Activated naive CD4-positive, alpha-beta T cell treated with anti-CD3 and anti-CD28 coated beads for 36 hours (primary cell): ENCODE measurements at regions of chr7 and their contacts with region 1.

Region 1: DNA sequence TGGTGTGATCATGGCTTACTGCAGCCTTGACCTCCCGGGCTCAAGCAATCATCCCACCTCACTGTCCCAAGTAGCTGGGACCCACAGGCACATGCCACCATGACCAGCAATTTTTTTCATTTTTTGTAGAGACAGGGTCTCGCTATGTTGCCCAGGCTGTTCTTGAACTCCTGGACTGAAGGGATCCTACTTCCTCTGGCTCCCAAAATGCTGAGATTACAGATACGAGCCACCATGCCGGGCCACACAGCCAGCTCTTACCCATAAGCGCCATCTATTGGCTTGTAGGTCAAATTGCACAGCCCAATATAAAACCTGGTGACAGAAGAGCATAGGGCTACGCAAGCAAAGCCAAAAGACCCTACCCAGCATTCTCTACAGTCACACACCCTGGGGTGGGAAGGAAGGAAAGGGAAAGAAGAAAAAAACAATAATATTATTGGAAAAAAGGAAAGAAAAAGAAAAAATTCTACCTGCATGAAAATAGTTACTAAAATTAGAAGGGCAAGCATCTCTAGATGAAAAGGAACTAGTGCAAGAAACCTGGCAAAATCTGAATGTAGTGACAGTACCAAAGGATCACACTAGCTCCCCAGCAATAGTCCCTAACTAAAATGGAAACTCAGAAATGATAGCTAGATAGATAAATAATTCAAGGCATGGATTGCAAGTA is 29.4 kb upstream of the AMPH start:
- DNase-seq: peak; percentile 43
- H3K4me3 Mint-ChIP-seq: no peak overlapping the region
- H3K27ac Mint-ChIP-seq: no peak overlapping the region
- H3K4me1 Mint-ChIP-seq: no peaks in the 10 kb centered on the region
- H3K27me3 Mint-ChIP-seq: peaks cover 13% of the 10 kb centered on the region

Region 2: GRCh38 chr7:38411404-38411803 is 249.2 kb before region 1 on chr7:
- CTCF ChIA-PET with region 1: interaction called, 8 read pairs
- intact Hi-C with region 1: loop called (anchors 5 kb)
- DNase-seq: no peak
- H3K4me3 Mint-ChIP-seq: no peak overlapping the region
- H3K27ac Mint-ChIP-seq: no peak overlapping the region
- H3K4me1 Mint-ChIP-seq: peaks cover 23% of the 10 kb centered on the region
- H3K27me3 Mint-ChIP-seq: no peaks in the 10 kb centered on the region